Left ventricle myocardium inferior (tissue), 1 donor: ENCODE measurements at regions of chr4 and their contacts with region 1.

Region 1: GRCh38 chr4:47933840-47934239 is 19.5 kb upstream of the NFXL1 start:
- DNase-seq: no peak
- H3K4me3 ChIP-seq: no peak overlapping the region
- H3K27ac ChIP-seq: no peak overlapping the region
- H3K4me1 ChIP-seq: no peaks in the 10 kb centered on the region
- H3K27me3 ChIP-seq: peaks cover 22% of the 10 kb centered on the region
- CTCF ChIP-seq: peak; percentile 74

Region 2: GRCh38 chr4:47686294-47686872 is 247.5 kb before region 1 on chr4:
- intact Hi-C with region 1: loop called (anchors 5 kb)
- DNase-seq: peak; percentile 48
- H3K4me3 ChIP-seq: no peak overlapping the region
- H3K27ac ChIP-seq: peak overlapping the region; percentile 7
- H3K4me1 ChIP-seq: peaks cover 8% of the 10 kb centered on the region
- H3K27me3 ChIP-seq: no peaks in the 10 kb centered on the region
- CTCF ChIP-seq: peak; percentile 77

Region 3: GRCh38 chr4:48141048-48141447 is 207.2 kb after region 1 on chr4:
- intact Hi-C with region 1: no loop called
- DNase-seq: no peak
- H3K4me3 ChIP-seq: no peak overlapping the region
- H3K27ac ChIP-seq: no peak overlapping the region
- H3K4me1 ChIP-seq: no peaks in the 10 kb centered on the region
- H3K27me3 ChIP-seq: no peaks in the 10 kb centered on the region
- CTCF ChIP-seq: peak; percentile 64